GM12878 (cell line): ENCODE measurements at regions of chr1 and their contacts with region 1.

Region 1: GRCh38 chr1:167669209-167670124 is 39.4 kb downstream of the RCSD1 start:
- DNase-seq: peak; percentile 66
- ATAC-seq: peak; percentile 73
- H3K4me3 ChIP-seq: no peak overlapping the region
- H3K27ac ChIP-seq: peak overlapping the region; percentile 71
- H3K4me1 ChIP-seq: peaks cover 79% of the 10 kb centered on the region
- H3K27me3 ChIP-seq: no peaks in the 10 kb centered on the region
- CTCF ChIP-seq: 0 out of 6 replicates have a peak, but pooled peaks of 1 of the 3 experiments have one; percentile 3
- EP300 ChIP-seq: no peak
- POLR2A ChIP-seq: no peak
- RAD21 ChIP-seq: no peak

Region 2: GRCh38 chr1:167650269-167651160 is 19.0 kb before region 1 on chr1:
- CTCF ChIA-PET with region 1: interaction called, 4 read pairs
- POLR2A ChIA-PET with region 1: interaction called, 10 read pairs
- RAD21 ChIA-PET with region 1: interaction called, 4 read pairs
- SMC1A ChIA-PET with region 1: interaction called, 24 read pairs
- in situ Hi-C with region 1: no loop called
- intact Hi-C with region 1: no loop called
- DNase-seq: no peak
- ATAC-seq: peak; percentile 92
- H3K4me3 ChIP-seq: no peak overlapping the region
- H3K27ac ChIP-seq: peak overlapping the region; percentile 55
- H3K4me1 ChIP-seq: peaks cover 39% of the 10 kb centered on the region
- H3K27me3 ChIP-seq: no peaks in the 10 kb centered on the region
- CTCF ChIP-seq: no peak
- EP300 ChIP-seq: no peak
- POLR2A ChIP-seq: peak; percentile 23; the same call in 1 of the 2 replicates
- RAD21 ChIP-seq: no peak

Region 3: GRCh38 chr1:167681451-167682098 is 12.1 kb after region 1 on chr1:
- CTCF ChIA-PET with region 1: interaction called, 7 read pairs
- POLR2A ChIA-PET with region 1: interaction called, 9 read pairs
- RAD21 ChIA-PET with region 1: interaction called, 8 read pairs
- SMC1A ChIA-PET with region 1: interaction called, 37 read pairs
- in situ Hi-C with region 1: no loop called
- intact Hi-C with region 1: no loop called
- DNase-seq: no peak
- ATAC-seq: peak; percentile 16; the same call in 2 of the 3 replicates
- H3K4me3 ChIP-seq: no peak overlapping the region
- H3K27ac ChIP-seq: peak overlapping the region; percentile 36
- H3K4me1 ChIP-seq: peaks cover 49% of the 10 kb centered on the region
- H3K27me3 ChIP-seq: no peaks in the 10 kb centered on the region
- CTCF ChIP-seq: no peak
- EP300 ChIP-seq: no peak
- POLR2A ChIP-seq: no peak
- RAD21 ChIP-seq: no peak

Region 4: DNA sequence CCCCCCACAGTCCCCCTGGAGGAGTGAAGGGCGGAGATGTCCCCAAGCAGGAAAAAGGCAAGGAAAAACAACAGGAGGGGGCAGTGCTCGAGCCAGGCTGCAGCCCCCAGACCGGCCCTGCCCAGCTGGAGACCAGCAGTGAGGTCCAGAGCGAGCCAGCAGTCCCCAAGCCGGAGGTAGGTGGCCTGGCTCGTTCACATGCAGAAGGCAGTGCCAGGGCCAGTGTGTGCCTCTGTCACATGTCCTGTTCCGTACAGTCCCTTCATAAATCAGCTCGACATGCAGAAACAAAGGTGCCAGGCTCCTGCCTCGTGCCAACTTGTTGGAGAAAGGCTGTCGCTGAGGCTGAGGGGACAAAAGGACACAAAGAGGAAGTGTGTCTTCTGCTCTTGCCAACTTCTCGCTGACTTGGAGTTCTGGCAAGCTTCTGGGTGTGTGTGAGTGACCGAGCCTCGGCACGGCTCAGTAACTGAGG is 28.2 kb after region 1 on chr1:
- CTCF ChIA-PET with region 1: no interaction called
- POLR2A ChIA-PET with region 1: no interaction called
- RAD21 ChIA-PET with region 1: no interaction called
- SMC1A ChIA-PET with region 1: no interaction called
- in situ Hi-C with region 1: no loop called
- intact Hi-C with region 1: no loop called
- DNase-seq: no peak
- ATAC-seq: no peak
- H3K4me3 ChIP-seq: no peak overlapping the region
- H3K27ac ChIP-seq: no peak overlapping the region
- H3K4me1 ChIP-seq: no peaks in the 10 kb centered on the region
- H3K27me3 ChIP-seq: no peaks in the 10 kb centered on the region
- CTCF ChIP-seq: no peak
- EP300 ChIP-seq: no peak
- POLR2A ChIP-seq: no peak
- RAD21 ChIP-seq: no peak